AG04449 (cell line): ENCODE measurements at regions of chr4 and their contacts with region 1.

Region 1: GRCh38 chr4:106512706-106513105 is 144.1 kb upstream of the GIMD1 start:
- DNase-seq: no peak
- H3K4me3 ChIP-seq: no peak overlapping the region
- CTCF ChIP-seq: no peak

Region 2: GRCh38 chr4:106502106-106502699 is 10.5 kb before region 1 on chr4:
- CTCF ChIA-PET with region 1: interaction called, 11 read pairs
- POLR2A ChIA-PET with region 1: no interaction called
- DNase-seq: no peak
- H3K4me3 ChIP-seq: no peak overlapping the region
- CTCF ChIP-seq: peak; percentile 78